GM23248 (cell line): ENCODE measurements at regions of chr4 and their contacts with region 1.

Region 1: DNA sequence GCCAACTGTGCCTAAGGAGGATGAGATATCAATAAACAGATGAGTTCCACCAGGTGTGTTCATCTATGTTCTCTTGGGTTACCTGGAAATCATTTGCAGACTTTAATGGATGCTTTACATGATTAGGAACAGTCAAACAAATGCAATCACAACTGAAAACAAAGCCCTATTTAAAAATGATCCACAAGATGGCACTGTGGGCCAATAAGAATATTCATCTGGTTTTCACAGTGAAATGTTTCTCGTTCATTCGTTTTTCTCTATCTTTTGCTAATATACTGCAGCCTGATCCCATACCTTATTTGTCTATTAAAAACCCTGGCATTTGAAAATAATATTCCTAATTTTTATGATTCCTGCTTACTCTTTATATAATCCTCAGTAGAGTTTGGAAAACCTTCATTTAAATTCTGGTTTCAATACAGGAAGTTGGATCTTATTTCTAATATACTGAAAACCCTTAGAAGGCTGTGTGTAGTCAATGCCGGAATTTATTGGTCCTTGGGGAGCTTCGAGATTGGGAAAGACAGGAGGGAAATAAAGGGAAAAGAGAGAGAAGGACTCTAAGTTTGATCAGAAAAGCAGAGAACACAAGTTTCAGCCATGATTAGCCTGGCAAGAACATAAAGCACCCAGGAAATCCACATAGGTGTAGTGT is 63.8 kb upstream of the TAPT1 start:
- DNase-seq: peak; percentile 58
- H3K4me3 ChIP-seq: peak overlapping the region; percentile 51
- H3K27ac ChIP-seq: no peak overlapping the region
- H3K4me1 ChIP-seq: peaks cover 15% of the 10 kb centered on the region
- H3K27me3 ChIP-seq: 0 out of 2 replicates have a peak, but pooled peaks cover 4% of the 10 kb centered on the region

Region 2: GRCh38 chr4:16443504-16444088 is 153.6 kb after region 1 on chr4:
- in situ Hi-C with region 1: loop called (anchors 10 kb)
- DNase-seq: peak; percentile 58
- H3K4me3 ChIP-seq: no peak overlapping the region
- H3K27ac ChIP-seq: no peak overlapping the region
- H3K4me1 ChIP-seq: peaks cover 9% of the 10 kb centered on the region
- H3K27me3 ChIP-seq: peaks cover 16% of the 10 kb centered on the region

Region 3: DNA sequence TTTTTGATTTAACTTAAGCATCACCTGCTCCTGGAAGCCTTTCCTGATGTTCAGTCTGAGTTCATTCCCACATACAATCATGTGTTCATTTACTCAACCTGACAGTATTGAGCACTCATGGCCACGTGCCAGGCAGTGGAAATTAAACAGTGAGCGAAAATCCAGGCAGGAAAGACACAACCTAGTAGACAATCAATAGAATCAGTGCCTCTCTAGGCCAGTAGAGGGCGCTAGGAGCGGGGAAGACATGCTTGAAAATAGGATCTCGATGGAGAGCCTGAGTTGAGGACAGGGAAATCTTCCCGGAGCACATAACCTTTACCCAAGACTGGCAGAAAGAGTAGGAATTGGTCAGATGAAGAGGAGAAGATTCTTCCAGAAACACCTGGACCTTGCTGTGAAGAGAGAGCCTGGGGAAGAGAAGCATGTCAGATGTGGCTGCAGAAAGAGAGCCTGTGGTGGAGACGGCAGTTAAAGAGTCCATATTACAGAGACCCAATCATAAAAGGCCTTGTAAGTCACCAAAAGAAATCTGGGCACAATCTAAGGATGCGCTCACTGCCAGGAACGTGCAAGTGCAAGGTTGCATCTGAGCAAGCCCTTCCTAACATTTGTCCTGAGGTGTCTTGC is 504.9 kb after region 1 on chr4:
- in situ Hi-C with region 1: loop called (anchors 25 kb)
- DNase-seq: peak; percentile 70
- H3K4me3 ChIP-seq: no peak overlapping the region
- H3K27ac ChIP-seq: no peak overlapping the region
- H3K4me1 ChIP-seq: no peaks in the 10 kb centered on the region
- H3K27me3 ChIP-seq: no peaks in the 10 kb centered on the region

Region 4: DNA sequence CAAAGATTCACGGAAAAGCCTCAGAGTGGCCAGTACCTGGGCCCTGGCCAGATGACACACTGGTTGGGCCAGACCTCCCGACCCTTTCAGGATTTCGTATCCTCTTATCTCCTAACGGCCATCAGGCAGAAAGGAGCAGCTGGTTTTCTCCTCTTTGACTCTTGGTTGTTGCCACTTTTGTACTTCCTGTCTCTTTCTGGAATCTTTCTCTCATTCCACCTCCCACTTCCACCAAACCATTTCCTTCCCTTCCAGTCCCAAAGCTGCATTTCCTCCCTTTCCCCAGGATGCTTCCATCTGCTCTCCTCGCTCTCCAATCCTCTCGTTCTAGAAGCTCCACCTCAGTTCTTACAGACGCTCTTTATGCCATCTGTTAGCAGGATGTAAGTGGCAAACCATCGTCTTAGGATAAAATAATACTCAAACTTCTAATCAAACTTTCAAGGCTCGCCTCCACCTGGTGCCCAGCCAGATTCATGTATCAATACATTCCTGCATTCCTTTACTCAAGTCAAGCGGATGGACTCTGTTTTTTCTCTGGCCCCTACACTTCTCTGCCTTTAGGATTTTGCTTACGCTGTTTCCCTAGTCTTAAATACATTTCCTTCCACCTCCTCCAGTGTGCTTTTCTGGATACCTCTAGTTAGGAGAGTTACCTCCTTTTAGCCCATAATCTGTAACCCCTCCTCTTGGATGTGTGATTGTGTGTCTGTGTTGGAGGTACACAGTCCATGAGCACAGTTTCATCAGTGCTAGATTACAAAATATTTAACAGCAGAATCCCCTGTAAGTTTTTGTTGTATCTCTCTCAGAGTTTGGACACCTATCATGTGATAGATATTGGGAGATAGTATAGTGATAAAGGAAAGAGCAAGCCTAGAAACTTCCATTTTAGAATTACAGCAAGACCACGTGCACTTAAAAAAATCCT is 538.0 kb after region 1 on chr4:
- in situ Hi-C with region 1: no loop called
- DNase-seq: no peak
- H3K4me3 ChIP-seq: no peak overlapping the region
- H3K27ac ChIP-seq: no peak overlapping the region
- H3K4me1 ChIP-seq: 0 out of 2 replicates have a peak, but pooled peaks cover 10% of the 10 kb centered on the region
- H3K27me3 ChIP-seq: no peaks in the 10 kb centered on the region

Region 5: GRCh38 chr4:16916719-16917337 is 626.8 kb after region 1 on chr4:
- in situ Hi-C with region 1: loop called (anchors 25 kb)
- DNase-seq: peak; percentile 25
- H3K4me3 ChIP-seq: no peak overlapping the region
- H3K27ac ChIP-seq: no peak overlapping the region
- H3K4me1 ChIP-seq: peaks cover 5% of the 10 kb centered on the region; the same call in 1 of the 2 replicates
- H3K27me3 ChIP-seq: no peaks in the 10 kb centered on the region

Region 6: GRCh38 chr4:17347445-17347844 is 1057.4 kb after region 1 on chr4:
- in situ Hi-C with region 1: loop called (anchors 25 kb)
- DNase-seq: peak; percentile 63
- H3K4me3 ChIP-seq: no peak overlapping the region
- H3K27ac ChIP-seq: no peak overlapping the region
- H3K4me1 ChIP-seq: no peaks in the 10 kb centered on the region
- H3K27me3 ChIP-seq: no peaks in the 10 kb centered on the region

Region 7: GRCh38 chr4:17468371-17469221 is 1178.6 kb after region 1 on chr4:
- in situ Hi-C with region 1: loop called (anchors 10 kb)
- DNase-seq: peak; percentile 78
- H3K4me3 ChIP-seq: no peak overlapping the region
- H3K27ac ChIP-seq: no peak overlapping the region
- H3K4me1 ChIP-seq: no peaks in the 10 kb centered on the region
- H3K27me3 ChIP-seq: no peaks in the 10 kb centered on the region